ENCODE measurements at regions of chr21 and their contacts with region 1.

Region 1: DNA sequence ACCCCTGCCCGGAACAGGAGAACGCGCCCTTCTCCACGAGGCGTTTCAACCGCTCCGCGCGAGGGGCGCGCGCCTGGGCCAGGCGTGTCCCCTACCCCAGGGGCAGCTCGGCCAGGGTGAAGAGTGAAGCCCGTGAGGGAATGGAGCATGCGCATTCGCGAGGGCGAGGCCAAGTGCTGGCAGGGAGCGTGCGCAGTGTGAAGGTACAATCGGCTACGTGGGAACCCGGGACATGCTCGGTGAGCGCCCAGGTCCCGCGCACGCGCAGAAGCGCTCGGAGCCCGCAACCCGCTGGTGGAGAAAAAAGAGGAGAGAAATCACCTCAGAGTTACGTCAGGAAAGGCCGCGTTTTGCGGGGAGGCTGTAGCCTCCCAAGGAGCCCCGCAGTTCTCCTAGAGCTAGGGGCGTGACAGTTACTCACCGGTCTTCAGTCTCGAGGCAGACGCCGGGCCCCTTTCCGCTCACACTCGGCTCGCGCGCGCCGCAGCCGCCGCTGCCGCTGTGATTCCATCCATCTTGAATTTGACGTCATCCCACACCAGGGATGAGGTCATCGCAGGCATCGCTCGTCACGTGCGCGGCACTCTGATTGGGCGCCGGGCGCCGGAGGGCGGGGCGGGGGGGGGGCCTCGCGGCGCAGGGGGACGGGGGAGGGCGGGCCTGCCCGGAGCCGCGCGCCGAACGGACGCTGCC is at the start of gene ZBTB21:
- DNase-seq: peak; percentile 99
- ATAC-seq: peak; percentile 97
- total RNA-seq, gene ZBTB21: 5.5 TPM

Region 2: GRCh38 chr21:41802684-41803083 is 207.3 kb before region 1 on chr21:
- intact Hi-C with region 1: no loop called
- DNase-seq: peak; percentile 79
- ATAC-seq: peak; percentile 85

Region 3: DNA sequence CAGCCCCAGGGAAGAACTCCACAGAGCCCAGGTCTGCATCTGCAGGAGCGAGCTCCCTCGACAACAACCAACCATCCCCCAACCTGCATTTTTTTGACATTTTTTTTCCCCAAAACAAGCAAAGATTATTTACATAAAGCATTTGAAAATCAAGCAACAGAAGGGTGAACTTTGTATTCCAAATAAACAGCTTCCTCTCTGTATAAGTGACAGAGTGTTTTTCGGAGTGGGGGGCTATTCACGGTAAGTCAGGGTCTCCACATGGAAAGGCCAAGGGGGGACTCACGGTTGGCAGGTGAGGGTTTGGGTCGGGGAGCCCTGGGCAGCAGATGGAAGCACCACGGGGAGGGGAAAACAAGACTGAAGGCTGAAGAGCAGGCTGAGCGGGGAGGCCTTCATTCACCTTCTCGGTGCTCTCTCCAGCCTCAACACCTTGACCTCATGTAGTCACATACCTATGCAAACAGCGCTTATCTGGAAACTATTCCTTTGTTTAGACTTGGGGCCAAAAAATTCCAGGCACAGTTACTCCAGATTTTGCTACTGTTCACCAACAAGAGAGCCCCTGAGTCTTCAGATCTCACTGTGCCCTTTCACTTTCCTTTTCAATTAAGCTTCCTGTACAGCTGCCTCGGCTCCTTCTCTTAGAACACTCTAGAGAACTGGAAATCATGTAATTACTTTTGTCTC is 83.7 kb before region 1 on chr21:
- intact Hi-C with region 1: loop called (anchors 10 kb)
- DNase-seq: no peak
- ATAC-seq: peak; percentile 70

Measured in Right ventricle myocardium superior (tissue), 1 donor.